Panc1 (cell line): ENCODE measurements at regions of chr6 and their contacts with region 1.

Region 1: DNA sequence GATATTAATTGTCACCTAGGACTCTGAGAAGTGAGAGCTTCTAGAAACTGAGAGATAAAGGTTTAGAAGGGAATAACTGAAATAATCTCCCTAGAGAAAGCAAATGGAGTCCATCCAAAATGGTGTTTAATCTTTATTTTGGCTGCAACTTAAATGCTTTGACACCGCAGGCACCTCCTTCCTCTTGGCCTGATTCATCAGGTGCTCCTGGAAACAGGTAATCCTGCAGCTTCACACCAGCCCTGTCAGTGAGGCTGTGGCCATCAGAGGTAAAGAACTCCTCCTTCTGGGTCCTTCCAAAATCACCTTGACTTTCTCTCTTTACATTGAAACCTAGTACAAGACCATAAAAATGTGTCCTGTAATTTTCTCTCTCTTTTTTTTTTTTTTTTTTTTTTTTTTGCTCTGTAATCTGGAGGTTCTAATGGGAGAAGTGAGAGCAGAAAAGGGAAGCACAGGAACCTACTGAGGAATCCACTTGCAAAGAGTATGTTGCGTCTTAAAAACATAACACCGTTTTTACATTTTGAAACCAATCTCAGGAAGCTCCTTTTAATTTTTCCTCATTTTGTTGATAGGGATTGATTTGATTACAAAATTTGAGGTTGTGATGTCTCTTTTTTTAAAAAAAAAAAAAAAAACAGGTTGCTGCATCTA is 124.2 kb downstream of the LRRC1 start:
- DNase-seq: no peak
- ATAC-seq: no peak
- H3K4me3 ChIP-seq: no peak overlapping the region
- H3K27ac ChIP-seq: no peak overlapping the region
- H3K4me1 ChIP-seq: no peaks in the 10 kb centered on the region
- H3K27me3 ChIP-seq: no peaks in the 10 kb centered on the region
- CTCF ChIP-seq: no peak

Region 2: DNA sequence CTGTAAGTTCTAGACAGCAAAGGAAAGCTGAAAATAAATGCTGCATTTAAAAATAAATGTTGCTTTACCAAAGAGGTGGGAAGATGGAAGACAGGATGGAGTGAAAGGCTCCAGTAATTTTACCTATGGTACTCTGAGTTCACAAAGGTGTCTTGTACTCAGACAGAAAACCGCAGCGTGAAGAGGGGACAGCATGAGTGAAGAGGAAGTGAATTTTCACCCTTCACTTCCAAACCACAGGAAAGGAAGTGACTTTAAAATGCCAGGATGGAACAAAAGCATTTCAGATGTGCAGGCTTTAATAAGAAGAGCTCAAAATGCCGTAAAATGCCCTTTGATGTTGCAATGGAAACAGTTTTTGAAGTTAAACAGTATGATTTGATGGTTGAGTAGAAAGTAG is 298.0 kb after region 1 on chr6:
- CTCF ChIA-PET with region 1: interaction called, 10 read pairs
- POLR2A ChIA-PET with region 1: no interaction called
- in situ Hi-C with region 1: no loop called
- intact Hi-C with region 1: no loop called
- DNase-seq: no peak
- ATAC-seq: no peak
- H3K4me3 ChIP-seq: no peak overlapping the region
- H3K27ac ChIP-seq: no peak overlapping the region
- H3K4me1 ChIP-seq: no peaks in the 10 kb centered on the region
- H3K27me3 ChIP-seq: no peaks in the 10 kb centered on the region
- CTCF ChIP-seq: no peak